ENCODE measurements at regions of chr13 and their contacts with region 1.

Region 1: DNA sequence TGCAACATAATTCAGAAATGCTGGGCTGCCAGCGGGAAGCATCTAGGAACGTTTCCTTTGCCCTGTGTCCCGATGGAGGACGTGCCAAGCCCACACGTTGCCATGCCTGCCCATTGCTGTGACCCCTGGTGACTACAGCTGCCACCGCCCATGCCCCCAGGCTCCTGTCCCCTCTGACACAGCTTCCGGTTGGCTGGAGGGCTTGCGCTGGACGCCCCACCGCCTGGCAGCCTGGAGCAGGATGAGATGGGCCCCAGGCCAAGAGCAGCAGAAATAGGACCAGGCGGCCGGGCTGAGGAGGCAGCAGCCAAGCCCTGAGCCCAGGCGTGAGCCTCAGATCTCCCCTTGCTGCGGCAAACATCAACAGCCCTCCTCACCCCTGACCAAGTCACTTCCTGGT is 125.9 kb downstream of the COL4A2 start:
- DNase-seq: peak; percentile 81 to 89 (median 88)
- ATAC-seq: peak; percentile 82 to 85
- H3K4me3 ChIP-seq: no peak overlapping the region
- H3K27ac ChIP-seq: peak overlapping the region; percentile 60
- H3K4me1 ChIP-seq: peaks cover 12% of the 10 kb centered on the region
- H3K27me3 ChIP-seq: no peaks in the 10 kb centered on the region

Region 2: GRCh38 chr13:110216398-110217041 is 216.5 kb before region 1 on chr13:
- intact Hi-C with region 1: loop called in 1 of 4 experiments (anchors 10 kb)
- DNase-seq: peak in 1 of 3 donors; percentile 64
- ATAC-seq: peak; percentile 71 to 81
- H3K4me3 ChIP-seq: no peak overlapping the region
- H3K27ac ChIP-seq: peak overlapping the region; percentile 73
- H3K4me1 ChIP-seq: peaks cover 23% of the 10 kb centered on the region
- H3K27me3 ChIP-seq: no peaks in the 10 kb centered on the region

Region 3: GRCh38 chr13:110390567-110390966 is 42.4 kb before region 1 on chr13:
- intact Hi-C with region 1: loop called in 1 of 4 experiments (anchors 2 kb)
- DNase-seq: no peak
- ATAC-seq: no peak
- H3K4me3 ChIP-seq: no peak overlapping the region
- H3K27ac ChIP-seq: no peak overlapping the region
- H3K4me1 ChIP-seq: peaks cover 13% of the 10 kb centered on the region
- H3K27me3 ChIP-seq: no peaks in the 10 kb centered on the region

Measured in right cardiac atrium (tissue), 5 donors.